Esophagus muscularis mucosa (tissue), 4 donors: ENCODE measurements at regions of chr5 and their contacts with region 1.

Region 1: DNA sequence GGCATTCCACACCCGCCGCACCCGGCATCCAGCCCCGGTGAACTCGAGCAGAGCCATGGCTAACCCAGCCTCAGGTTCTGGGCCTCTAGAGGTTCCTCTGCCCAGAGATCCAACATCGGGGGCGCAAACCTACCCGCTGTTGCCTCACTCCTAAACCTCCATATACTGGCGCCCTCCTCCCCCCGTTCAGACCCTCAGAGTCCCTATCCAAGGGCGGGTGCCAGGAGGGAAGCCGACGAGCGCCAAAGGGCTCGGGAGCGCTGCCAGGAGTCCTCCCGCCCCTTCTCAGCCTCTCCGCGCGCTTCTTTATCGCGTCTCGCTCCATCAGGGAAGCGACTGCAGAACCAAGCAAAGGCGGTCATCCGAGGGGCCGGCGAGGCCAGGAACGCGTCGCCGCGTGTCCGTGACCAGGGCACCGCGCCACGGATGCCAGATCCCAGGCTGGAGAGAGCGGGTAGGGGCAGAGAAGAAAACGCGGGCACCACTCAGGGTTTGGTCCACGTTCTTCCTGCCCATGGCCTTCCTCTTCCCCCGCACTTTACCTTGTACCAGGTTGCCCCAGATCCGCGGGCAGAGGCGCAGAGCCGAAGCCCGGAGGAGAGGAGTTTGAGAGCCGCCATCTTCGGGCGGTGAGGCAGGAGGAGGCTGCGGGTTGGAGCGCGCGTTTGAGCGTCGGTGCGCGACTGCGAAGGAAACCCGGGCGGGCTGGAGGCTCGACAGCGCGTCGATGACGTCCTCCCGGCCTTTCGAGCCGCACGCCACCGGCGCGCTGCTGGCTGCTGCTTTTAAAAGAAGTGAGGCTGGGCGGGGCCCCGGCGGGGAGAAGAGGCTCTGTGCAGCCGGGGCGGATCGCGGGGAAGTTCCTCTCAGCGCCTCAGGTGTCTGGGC is at the start of gene OXCT1:
- DNase-seq: peak; percentile 95
- H3K4me3 ChIP-seq: peak within 1 kb of the TSS; percentile 70 to 88 (median 84)
- H3K27ac ChIP-seq: peak within 1 kb of the TSS; percentile 95 to 98 (median 97)
- H3K4me1 ChIP-seq: peaks cover 11 to 40% (median 37%) of the 10 kb centered on the region in 4 donors
- H3K27me3 ChIP-seq: no peaks in the 10 kb centered on the region
- CTCF ChIP-seq: no peak
- EP300 ChIP-seq: no peak
- POLR2A ChIP-seq: no peak
- total RNA-seq, gene OXCT1: 30.8 to 47.6 (median 37.7) TPM

Region 2: GRCh38 chr5:40853632-40854192 is 1016.3 kb before region 1 on chr5:
- intact Hi-C with region 1: no loop called
- DNase-seq: no peak
- H3K4me3 ChIP-seq: no peak overlapping the region
- H3K27ac ChIP-seq: no peak overlapping the region
- H3K4me1 ChIP-seq: no peaks in the 10 kb centered on the region
- H3K27me3 ChIP-seq: no peaks in the 10 kb centered on the region
- CTCF ChIP-seq: no peak
- EP300 ChIP-seq: no peak
- POLR2A ChIP-seq: no peak

Region 3: GRCh38 chr5:41748631-41749030 is 121.4 kb before region 1 on chr5:
- intact Hi-C with region 1: no loop called
- DNase-seq: no peak
- H3K4me3 ChIP-seq: no peak overlapping the region
- H3K27ac ChIP-seq: no peak overlapping the region
- H3K4me1 ChIP-seq: peaks cover 0 to 12% (median 5%) of the 10 kb centered on the region in 4 donors
- H3K27me3 ChIP-seq: no peaks in the 10 kb centered on the region
- CTCF ChIP-seq: no peak
- EP300 ChIP-seq: no peak
- POLR2A ChIP-seq: no peak

Region 4: DNA sequence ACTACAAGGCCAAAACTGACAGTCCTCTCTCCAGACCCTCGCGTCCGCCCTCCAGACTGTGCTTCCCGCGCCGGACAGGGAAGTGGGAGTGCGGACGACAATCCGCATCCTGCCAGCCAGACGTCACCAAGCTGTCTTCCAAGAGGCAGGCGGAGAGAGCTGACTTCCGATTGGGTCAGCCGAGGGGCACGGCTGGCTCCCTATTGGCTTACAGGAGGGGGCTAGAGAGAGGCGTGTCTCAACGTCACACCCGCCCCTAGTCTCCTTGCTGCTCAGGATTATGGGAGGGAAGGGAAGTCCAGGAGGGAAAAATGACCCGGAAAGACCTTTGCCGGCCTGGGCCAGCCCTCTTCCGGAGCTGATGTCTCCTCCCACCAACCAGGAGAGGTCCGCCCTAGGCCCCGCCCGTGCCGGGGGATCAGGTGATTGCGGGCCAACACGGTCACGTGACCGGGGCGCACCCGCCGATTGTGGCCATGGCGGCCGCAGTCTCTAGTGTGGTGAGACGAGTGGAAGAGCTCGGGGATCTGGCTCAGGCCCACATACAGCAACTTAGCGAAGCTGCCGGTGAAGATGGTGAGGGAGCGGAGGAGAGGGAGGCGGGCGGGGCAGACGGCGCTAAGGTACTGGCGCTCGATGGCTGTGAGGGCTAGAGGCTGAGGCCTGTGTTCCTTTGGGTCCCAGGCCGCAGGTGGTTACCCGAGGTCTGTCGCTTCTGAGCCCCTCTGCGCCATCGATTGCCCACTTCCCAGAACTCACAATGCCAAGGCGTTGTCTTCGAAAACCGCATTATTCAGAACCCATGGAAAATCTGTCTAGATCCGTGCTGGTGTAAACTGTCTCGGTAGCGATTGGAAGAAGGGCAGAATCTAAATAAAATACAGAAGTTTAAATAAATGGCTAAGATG is 34.2 kb after region 1 on chr5 and contains the start of gene RIMOC1:
- intact Hi-C with region 1: loop called (anchors 2 kb)
- DNase-seq: peak; percentile 100
- H3K4me3 ChIP-seq: peak within 1 kb of the TSS; percentile 72 to 86 (median 78)
- H3K27ac ChIP-seq: peak within 1 kb of the TSS; percentile 88 to 95 (median 90)
- H3K4me1 ChIP-seq: peaks cover 14 to 42% (median 29%) of the 10 kb centered on the region in 4 donors
- H3K27me3 ChIP-seq: no peaks in the 10 kb centered on the region
- CTCF ChIP-seq: no peak
- EP300 ChIP-seq: no peak
- POLR2A ChIP-seq: peak; percentile 82
- total RNA-seq, gene RIMOC1: 19.5 to 24.5 (median 20.2) TPM

Region 5: GRCh38 chr5:41924872-41925554 is 55.0 kb after region 1 on chr5 and contains the start of gene FBXO4:
- intact Hi-C with region 1: loop called (anchors 2 kb)
- DNase-seq: peak; percentile 94
- H3K4me3 ChIP-seq: peak within 1 kb of the TSS; percentile 73 to 88 (median 74)
- H3K27ac ChIP-seq: peak within 1 kb of the TSS; percentile 91 to 97 (median 94)
- H3K4me1 ChIP-seq: peaks cover 6 to 17% (median 13%) of the 10 kb centered on the region in 4 donors
- H3K27me3 ChIP-seq: no peaks in the 10 kb centered on the region
- CTCF ChIP-seq: peak; percentile 46 to 64 (median 47)
- EP300 ChIP-seq: no peak
- POLR2A ChIP-seq: no peak
- total RNA-seq, gene FBXO4: 5.1 to 8.8 (median 7.5) TPM

Region 6: GRCh38 chr5:42423285-42424165 is 553.5 kb after region 1 on chr5 and contains the start of gene GHR:
- intact Hi-C with region 1: loop called (anchors 10 kb)
- DNase-seq: peak; percentile 94
- H3K4me3 ChIP-seq: peak within 1 kb of the TSS; percentile 75 to 87 (median 79)
- H3K27ac ChIP-seq: peak within 1 kb of the TSS; percentile 83 to 90 (median 84)
- H3K4me1 ChIP-seq: peaks cover 11 to 35% (median 33%) of the 10 kb centered on the region in 4 donors
- H3K27me3 ChIP-seq: no peaks in the 10 kb centered on the region
- CTCF ChIP-seq: peak; percentile 72 to 87 (median 76)
- EP300 ChIP-seq: no peak
- POLR2A ChIP-seq: no peak
- total RNA-seq, gene GHR: 5.3 to 9.1 (median 6.5) TPM